MCF 10A (cell line): ENCODE measurements at regions of chr3 and their contacts with region 1.

Region 1: DNA sequence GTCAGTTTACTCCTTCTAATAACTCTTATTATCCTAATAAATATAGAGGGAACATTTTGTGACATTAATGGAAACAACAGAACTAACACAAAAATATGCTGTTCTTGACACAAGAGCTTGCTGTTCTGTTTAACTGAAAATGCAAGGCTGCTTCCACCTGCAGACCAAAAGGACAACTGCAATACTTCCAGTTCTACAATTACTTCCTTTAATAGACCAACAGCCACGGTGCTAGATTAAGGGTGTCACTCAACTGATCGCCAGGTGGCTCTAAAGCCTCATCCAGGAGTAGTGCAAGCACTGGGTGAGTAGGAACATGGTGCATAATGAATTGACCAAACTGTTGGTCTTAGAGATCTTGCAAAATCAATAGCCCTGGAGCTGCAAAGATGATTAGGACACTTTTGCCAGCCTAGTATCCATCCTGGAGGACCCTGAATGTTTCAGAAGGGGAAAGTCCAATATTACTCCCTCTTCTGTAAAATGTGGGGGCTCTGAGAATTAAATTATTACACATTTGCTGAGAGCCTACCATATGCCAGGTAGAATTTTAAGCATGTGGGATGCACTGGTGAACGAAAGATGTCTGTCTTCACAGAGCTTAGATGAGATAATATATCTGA is 3.6 kb upstream of the CLDN16 start:
- DNase-seq: peak; percentile 93
- H3K4me3 Mint-ChIP-seq: no peak overlapping the region
- H3K27ac Mint-ChIP-seq: peak overlapping the region; percentile 97
- H3K4me1 Mint-ChIP-seq: peaks cover 50% of the 10 kb centered on the region
- H3K27me3 Mint-ChIP-seq: no peaks in the 10 kb centered on the region
- CTCF ChIP-seq: peak; percentile 88

Region 2: DNA sequence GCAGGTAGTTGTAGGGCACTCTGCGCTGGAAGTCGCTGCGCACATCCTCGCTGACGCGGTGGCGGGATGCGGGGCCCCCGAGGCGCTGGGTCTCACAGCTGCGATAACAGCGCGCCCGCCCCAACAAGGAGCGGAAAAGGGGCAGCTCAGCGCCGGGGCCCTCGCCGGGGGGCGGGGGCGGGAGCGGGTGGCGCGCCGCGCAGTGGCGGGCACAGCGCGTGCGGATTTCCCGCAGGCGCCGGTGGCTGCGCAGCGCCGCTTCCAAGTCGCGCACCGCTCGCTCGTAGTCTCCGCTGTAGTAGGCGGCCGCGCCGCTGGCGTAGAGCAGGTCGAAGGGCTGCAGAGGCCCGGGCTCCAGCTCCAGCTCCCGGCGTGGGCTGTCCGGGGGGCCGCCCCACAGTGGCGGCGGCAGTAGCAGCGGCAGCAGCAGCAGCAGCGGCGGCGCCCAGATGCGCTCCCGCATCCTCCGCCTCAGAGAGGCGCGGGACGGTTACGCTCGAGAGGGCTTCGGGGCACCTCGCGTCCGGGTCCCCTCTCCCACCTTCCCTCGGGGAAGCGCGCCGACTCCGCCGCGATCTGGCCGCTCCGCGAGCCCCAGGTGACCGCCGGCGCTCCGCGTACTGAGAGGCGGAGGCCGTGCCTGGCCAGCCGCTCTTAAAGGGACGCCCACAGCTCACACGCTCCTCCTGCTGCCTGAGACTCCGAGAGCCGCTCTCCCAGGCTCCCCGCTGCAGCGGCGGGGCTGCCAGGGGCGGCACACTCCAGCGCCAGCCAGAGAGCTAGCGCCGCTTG is 263.9 kb before region 1 on chr3 and contains the start of gene P3H2:
- CTCF ChIA-PET with region 1: interaction called, 3 read pairs
- POLR2A ChIA-PET with region 1: interaction called, 15 read pairs
- intact Hi-C with region 1: loop called (anchors 5 kb)
- DNase-seq: peak; percentile 91
- H3K4me3 Mint-ChIP-seq: peak within 1 kb of the TSS; percentile 95
- H3K27ac Mint-ChIP-seq: peak within 1 kb of the TSS; percentile 70
- H3K4me1 Mint-ChIP-seq: peaks cover 51% of the 10 kb centered on the region
- H3K27me3 Mint-ChIP-seq: no peaks in the 10 kb centered on the region
- CTCF ChIP-seq: peak; percentile 32
- total RNA-seq, gene P3H2: 19.8 and 60.2 TPM in 2 replicates

Region 3: DNA sequence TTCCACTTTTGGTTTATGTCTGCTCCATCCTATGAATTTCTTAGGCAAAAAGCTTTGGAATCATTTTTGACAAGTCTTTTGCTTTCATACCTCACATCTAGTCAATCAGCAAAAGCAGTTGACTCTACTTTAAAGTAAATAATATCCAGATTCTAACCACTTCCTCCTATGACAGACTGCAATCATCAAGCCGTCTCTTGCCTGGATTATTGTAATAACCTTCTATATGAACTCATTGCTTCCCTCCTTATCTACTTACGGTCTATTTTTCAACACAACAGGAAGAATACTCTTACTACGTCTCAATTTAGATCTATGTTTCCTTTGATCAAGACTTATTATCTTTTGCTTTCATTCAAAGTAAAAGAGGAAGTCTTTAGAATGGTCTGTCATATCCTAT is 82.8 kb before region 1 on chr3:
- CTCF ChIA-PET with region 1: interaction called, 4 read pairs
- POLR2A ChIA-PET with region 1: interaction called, 21 read pairs
- intact Hi-C with region 1: no loop called
- DNase-seq: no peak
- H3K4me3 Mint-ChIP-seq: no peak overlapping the region
- H3K27ac Mint-ChIP-seq: peak overlapping the region; percentile 47
- H3K4me1 Mint-ChIP-seq: peaks cover 20% of the 10 kb centered on the region
- H3K27me3 Mint-ChIP-seq: no peaks in the 10 kb centered on the region
- CTCF ChIP-seq: no peak

Region 4: GRCh38 chr3:190366145-190366544 is 18.2 kb before region 1 on chr3:
- CTCF ChIA-PET with region 1: interaction called, 21 read pairs
- POLR2A ChIA-PET with region 1: interaction called, 59 read pairs
- intact Hi-C with region 1: no loop called
- DNase-seq: peak; percentile 79
- H3K4me3 Mint-ChIP-seq: no peak overlapping the region
- H3K27ac Mint-ChIP-seq: peak overlapping the region; percentile 87
- H3K4me1 Mint-ChIP-seq: peaks cover 37% of the 10 kb centered on the region
- H3K27me3 Mint-ChIP-seq: no peaks in the 10 kb centered on the region
- CTCF ChIP-seq: no peak

Region 5: DNA sequence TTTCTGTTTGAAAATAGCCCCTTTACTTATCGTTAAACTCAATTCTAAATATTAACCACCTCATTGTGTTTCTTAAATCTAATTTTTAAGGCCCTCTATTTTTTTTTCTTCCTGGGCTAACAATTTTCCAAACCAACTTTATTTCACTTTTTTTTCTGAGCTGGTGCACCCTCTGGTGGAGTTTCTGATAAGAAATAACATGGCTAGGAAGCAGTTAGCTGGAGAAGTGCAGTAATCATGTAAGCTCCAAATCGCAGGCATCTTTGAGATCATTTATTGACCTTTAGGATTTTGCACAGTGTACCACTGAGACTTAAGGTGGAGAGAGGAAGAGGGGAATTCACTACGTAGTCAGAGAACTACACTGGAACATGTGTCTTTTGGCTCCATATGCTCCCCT is 58.9 kb after region 1 on chr3:
- CTCF ChIA-PET with region 1: interaction called, 12 read pairs
- POLR2A ChIA-PET with region 1: no interaction called
- intact Hi-C with region 1: loop called (anchors 1 kb)
- DNase-seq: peak; percentile 30
- H3K4me3 Mint-ChIP-seq: no peak overlapping the region
- H3K27ac Mint-ChIP-seq: no peak overlapping the region
- H3K4me1 Mint-ChIP-seq: no peaks in the 10 kb centered on the region
- H3K27me3 Mint-ChIP-seq: no peaks in the 10 kb centered on the region
- CTCF ChIP-seq: peak; percentile 36

Region 6: DNA sequence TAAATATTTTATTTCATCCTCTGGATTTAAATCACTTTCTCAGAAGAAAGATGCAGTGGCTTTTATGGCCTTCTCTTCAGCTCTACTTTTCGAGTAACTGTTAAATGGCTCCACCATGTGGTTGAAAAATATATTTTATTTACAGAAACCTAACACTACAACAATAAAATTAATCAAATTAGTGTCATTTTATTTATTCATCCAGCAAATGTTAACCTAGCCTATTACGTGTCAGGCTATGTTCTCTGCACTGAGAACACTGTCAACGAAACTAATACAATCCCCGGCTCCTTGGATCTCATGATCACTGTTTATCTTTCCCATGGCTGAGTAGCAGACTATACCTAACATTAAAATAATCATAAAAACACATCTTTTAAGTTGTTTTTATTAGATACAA is 666.7 kb after region 1 on chr3:
- CTCF ChIA-PET with region 1: no interaction called
- POLR2A ChIA-PET with region 1: no interaction called
- intact Hi-C with region 1: loop called (anchors 1 kb)
- DNase-seq: peak; percentile 41
- H3K4me3 Mint-ChIP-seq: no peak overlapping the region
- H3K27ac Mint-ChIP-seq: no peak overlapping the region
- H3K4me1 Mint-ChIP-seq: no peaks in the 10 kb centered on the region
- H3K27me3 Mint-ChIP-seq: no peaks in the 10 kb centered on the region
- CTCF ChIP-seq: peak; percentile 38

Region 7: DNA sequence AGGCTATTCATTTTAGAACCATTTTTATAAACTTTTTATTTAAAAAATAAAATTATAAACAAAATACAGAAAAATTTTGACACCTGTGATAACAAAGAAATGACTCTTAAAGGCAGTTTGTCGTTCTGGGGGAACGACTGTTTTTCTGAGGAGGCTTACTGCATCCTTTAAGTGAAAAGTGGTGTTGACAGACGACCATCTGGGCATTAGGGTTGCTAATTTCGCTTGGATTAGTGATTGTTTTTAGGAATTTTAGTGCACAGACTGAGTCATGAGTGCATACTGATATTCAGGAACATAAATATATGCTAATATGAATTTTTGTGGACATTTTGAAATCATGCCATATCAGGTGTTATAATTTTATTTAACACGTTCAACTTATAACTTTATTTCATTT is 843.2 kb after region 1 on chr3:
- CTCF ChIA-PET with region 1: no interaction called
- POLR2A ChIA-PET with region 1: no interaction called
- intact Hi-C with region 1: no loop called
- DNase-seq: no peak
- H3K4me3 Mint-ChIP-seq: no peak overlapping the region
- H3K27ac Mint-ChIP-seq: no peak overlapping the region
- H3K4me1 Mint-ChIP-seq: no peaks in the 10 kb centered on the region
- H3K27me3 Mint-ChIP-seq: no peaks in the 10 kb centered on the region
- CTCF ChIP-seq: no peak